PC-9 (cell line): ENCODE measurements at regions of chr10 and their contacts with region 1.

Region 1: GRCh38 chr10:72331601-72332422 is 22.9 kb downstream of the DNAJB12 start:
- DNase-seq: peak; percentile 95 to 99
- H3K4me3 ChIP-seq: peak overlapping the region; percentile 36; the same call in 1 of the 2 replicates
- H3K27ac ChIP-seq: peak overlapping the region; percentile 95
- H3K4me1 ChIP-seq: peaks cover 64% of the 10 kb centered on the region
- H3K27me3 ChIP-seq: no peaks in the 10 kb centered on the region
- CTCF ChIP-seq: peak; percentile 44

Region 2: GRCh38 chr10:71727738-71728737 is 603.8 kb before region 1 on chr10:
- CTCF ChIA-PET with region 1: no interaction called
- POLR2A ChIA-PET with region 1: no interaction called
- intact Hi-C with region 1: no loop called
- DNase-seq: peak; percentile 59 to 60
- H3K4me3 ChIP-seq: no peak overlapping the region
- H3K27ac ChIP-seq: peak overlapping the region; percentile 40; the same call in 1 of the 2 replicates
- H3K4me1 ChIP-seq: peaks cover 56% of the 10 kb centered on the region
- H3K27me3 ChIP-seq: no peaks in the 10 kb centered on the region
- CTCF ChIP-seq: no peak

Region 3: GRCh38 chr10:71766702-71767419 is 565.0 kb before region 1 on chr10:
- CTCF ChIA-PET with region 1: no interaction called
- POLR2A ChIA-PET with region 1: interaction called, 11 read pairs
- intact Hi-C with region 1: loop called (anchors 5 kb)
- DNase-seq: peak; percentile 95 to 99
- H3K4me3 ChIP-seq: peak overlapping the region; percentile 28; the same call in 1 of the 2 replicates
- H3K27ac ChIP-seq: peak overlapping the region; percentile 88
- H3K4me1 ChIP-seq: peaks cover 91% of the 10 kb centered on the region
- H3K27me3 ChIP-seq: no peaks in the 10 kb centered on the region
- CTCF ChIP-seq: no peak

Region 4: DNA sequence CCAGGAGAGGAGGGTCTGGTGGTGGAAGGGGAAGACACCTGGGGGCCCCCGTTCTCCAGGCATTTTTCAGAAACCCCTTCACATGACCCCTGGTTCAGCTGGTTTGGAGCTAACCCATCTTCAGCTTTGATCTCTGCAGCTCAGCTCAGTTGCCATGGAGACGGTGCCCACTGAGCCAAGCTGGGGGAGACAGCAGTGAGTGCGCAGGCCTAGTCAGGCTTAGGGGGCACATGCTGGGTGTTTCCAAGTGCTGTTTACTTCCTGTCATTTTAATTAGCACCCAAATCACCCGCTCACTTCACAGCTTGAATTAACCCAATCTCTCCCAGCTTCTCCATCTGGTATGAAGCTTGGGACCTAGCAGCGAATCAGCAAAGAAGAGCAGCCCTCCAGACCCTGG is 252.5 kb before region 1 on chr10:
- CTCF ChIA-PET with region 1: no interaction called
- POLR2A ChIA-PET with region 1: interaction called, 4 read pairs
- intact Hi-C with region 1: loop called (anchors 1 kb)
- DNase-seq: peak in 1 of 2 experiments; percentile 25
- H3K4me3 ChIP-seq: no peak overlapping the region
- H3K27ac ChIP-seq: peak overlapping the region; percentile 86
- H3K4me1 ChIP-seq: peaks cover 54% of the 10 kb centered on the region
- H3K27me3 ChIP-seq: no peaks in the 10 kb centered on the region
- CTCF ChIP-seq: no peak

Region 5: GRCh38 chr10:72223743-72224101 is 108.1 kb before region 1 on chr10:
- CTCF ChIA-PET with region 1: interaction called, 5 read pairs
- POLR2A ChIA-PET with region 1: no interaction called
- intact Hi-C with region 1: loop called (anchors 1 kb)
- DNase-seq: no peak
- H3K4me3 ChIP-seq: no peak overlapping the region
- H3K27ac ChIP-seq: peak overlapping the region; percentile 23; the same call in 1 of the 2 replicates
- H3K4me1 ChIP-seq: peaks cover 13% of the 10 kb centered on the region
- H3K27me3 ChIP-seq: no peaks in the 10 kb centered on the region
- CTCF ChIP-seq: no peak

Region 6: DNA sequence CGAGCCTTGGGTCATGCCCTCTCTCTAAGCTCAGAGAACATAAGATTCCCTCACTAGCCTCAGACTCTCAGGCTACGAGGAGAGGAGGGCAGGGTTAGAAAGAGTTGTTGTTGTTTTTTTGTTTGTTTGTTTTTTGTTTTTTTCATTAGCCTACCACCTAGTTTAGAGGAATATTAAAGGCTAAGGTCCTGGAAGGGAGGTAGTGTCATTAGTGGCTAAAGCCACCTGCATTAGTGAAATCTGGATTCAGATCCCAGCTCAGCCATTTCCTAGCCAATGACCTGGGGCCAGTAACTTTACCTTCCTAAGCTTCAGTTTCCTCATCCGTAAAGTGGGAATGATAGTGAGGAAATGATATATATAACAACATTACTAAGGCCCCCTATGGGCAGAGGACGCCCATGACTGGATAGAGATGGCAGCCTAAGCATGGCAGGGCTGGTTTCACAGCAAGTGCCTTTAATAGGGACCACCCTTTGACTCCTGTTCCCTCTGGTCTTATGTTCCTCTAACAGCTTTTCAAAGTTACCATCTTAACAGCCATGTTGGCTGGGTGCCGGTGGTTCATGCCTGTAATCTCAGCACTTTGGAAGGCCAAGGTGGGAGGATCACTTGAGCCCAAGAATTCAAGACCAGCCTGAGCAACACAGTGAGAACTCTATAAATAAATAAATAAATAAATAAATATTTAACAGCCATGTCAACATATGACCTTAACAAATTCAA is 53.0 kb before region 1 on chr10:
- CTCF ChIA-PET with region 1: interaction called, 18 read pairs
- POLR2A ChIA-PET with region 1: interaction called, 9 read pairs
- intact Hi-C with region 1: no loop called
- DNase-seq: no peak
- H3K4me3 ChIP-seq: no peak overlapping the region
- H3K27ac ChIP-seq: peak overlapping the region; percentile 83; the same call in 1 of the 2 replicates
- H3K4me1 ChIP-seq: peaks cover 25% of the 10 kb centered on the region
- H3K27me3 ChIP-seq: no peaks in the 10 kb centered on the region
- CTCF ChIP-seq: peak; percentile 31; the same call in 1 of the 2 replicates